Left colon (tissue), 2 donors: ENCODE measurements at regions of chr1 and their contacts with region 1.

Region 1: DNA sequence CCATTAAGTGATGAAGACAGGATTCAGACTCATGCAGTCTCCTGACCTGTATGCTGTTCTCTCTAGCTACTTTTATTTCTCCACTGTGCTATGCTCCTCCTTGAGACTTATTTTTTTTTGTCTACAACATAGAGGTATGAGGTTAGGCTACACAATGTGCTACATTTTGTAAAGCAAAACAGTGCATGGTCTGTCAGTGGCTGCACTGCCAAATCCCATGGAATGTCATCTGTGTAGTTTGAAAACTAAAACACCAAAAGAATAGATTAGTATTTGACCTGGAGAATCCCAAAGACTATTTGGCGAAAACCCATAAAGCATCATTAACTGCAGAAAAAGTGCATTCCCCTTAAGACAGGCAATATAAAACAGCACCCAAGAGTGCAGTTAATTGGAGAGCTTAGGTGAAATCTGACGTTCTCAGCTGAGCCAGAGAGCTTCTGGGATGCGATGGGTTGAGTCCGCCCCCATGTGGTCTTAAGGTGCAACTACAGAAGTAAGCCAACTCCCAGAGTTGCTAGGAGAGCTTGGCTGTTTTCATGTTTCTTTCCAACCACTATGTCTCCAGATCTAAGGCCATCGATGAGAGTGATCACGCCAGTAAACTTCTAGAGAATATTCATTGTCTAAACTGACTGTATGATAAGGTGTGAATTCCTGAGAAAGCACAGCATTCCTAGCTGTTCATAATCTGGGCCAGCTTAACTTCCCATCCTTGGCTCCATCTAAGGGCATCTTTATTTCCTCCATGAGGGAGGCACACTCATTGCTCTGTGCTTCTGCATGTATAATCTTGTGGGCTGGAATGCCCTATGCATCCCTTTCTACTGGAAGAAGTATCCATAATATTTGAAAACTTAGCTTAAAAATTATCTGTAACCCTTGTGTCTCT is 20.7 kb upstream of the CYP2J2 start:
- DNase-seq: peak in 1 of 2 donors; percentile 50
- ATAC-seq: peak; percentile 85

Region 2: DNA sequence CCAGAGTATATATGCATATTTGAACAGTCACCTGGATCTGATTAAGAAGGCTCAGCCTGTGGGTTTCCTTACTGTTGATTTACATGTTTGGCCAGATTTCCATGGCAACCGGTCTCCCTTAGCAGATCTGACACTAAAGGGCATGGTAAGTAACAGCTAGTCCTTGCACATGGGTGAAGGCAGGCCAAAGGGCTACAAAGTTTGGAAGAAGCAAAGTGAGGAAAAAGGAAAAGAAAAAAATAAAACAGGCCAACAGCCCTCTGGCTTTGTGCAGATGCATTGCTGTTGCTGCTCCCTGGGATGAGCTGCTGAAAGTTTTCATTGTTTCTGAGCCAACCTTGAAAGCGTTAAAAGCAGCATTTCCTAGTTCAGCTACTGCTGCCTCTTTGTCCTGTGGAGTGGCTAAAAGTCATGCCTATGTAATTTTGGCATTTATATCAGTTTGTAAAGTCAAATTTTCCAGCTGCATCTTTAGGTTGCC is 309.0 kb before region 1 on chr1:
- intact Hi-C with region 1: no loop called
- DNase-seq: peak in 1 of 2 donors; percentile 5
- ATAC-seq: no peak

Region 3: GRCh38 chr1:59879574-59879973 is 67.7 kb before region 1 on chr1:
- intact Hi-C with region 1: loop called in 1 of 2 experiments (anchors 5 kb)
- DNase-seq: peak; percentile 75 to 92
- ATAC-seq: peak; percentile 96

Region 4: DNA sequence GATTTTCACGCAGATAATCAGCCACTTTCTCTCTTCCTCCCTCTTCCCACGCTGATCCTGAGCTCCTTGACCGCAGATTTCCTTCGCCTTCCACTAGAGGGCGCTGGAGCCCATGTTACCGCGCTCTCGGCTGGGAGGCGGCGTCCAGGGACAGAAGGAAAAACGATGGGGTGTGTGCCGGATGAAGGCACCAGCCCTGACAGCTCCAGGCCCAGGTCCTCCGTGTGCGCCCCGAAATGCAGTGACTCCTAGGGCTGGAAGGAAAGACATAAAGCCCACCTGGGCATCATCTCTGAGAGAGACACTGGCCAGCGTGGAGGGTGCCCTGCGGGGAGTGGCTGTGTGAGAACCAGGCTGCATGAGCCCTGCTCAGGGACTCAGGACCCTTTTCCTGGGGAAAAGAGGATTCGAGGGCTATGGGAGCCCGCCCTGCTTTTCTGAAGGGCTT is 24.2 kb after region 1 on chr1:
- intact Hi-C with region 1: no loop called
- DNase-seq: peak; percentile 62 to 77
- ATAC-seq: peak; percentile 86